ENCODE measurements at regions of chr9 and their contacts with region 1.

Region 1: GRCh38 chr9:89602978-89603766 is 1.6 kb upstream of the GADD45G start:
- DNase-seq: peak; percentile 92
- H3K4me3 Mint-ChIP-seq: peak overlapping the region; percentile 76
- H3K27ac Mint-ChIP-seq: peak overlapping the region; percentile 46
- H3K4me1 Mint-ChIP-seq: peaks cover 33% of the 10 kb centered on the region
- H3K27me3 Mint-ChIP-seq: peaks cover 49% of the 10 kb centered on the region

Region 2: DNA sequence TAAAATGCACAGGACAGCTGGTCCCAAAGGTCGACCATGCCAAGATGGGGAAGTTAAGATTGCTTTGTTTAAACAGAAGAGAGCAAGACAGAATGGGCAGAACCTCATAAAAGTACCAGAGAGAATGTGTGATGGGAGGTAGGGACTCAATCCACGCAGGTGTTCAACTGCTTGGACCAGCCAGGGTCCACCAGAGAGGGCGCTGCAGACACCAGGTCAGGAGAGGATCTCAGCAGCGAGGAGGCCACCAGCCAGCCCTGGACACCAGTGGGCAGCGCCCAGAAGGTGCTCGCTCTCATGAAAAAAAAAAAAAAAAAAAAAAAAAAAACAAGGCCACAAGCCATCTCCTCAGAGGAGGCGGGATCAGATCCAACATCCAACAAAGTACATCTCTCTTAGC is 506.4 kb before region 1 on chr9:
- CTCF ChIA-PET with region 1: no interaction called
- POLR2A ChIA-PET with region 1: no interaction called
- DNase-seq: no peak
- H3K4me3 Mint-ChIP-seq: no peak overlapping the region
- H3K27ac Mint-ChIP-seq: no peak overlapping the region
- H3K4me1 Mint-ChIP-seq: no peaks in the 10 kb centered on the region
- H3K27me3 Mint-ChIP-seq: peaks cover 11% of the 10 kb centered on the region

Region 3: GRCh38 chr9:89613912-89614892 is 11.0 kb after region 1 on chr9:
- CTCF ChIA-PET with region 1: interaction called, 30 read pairs
- POLR2A ChIA-PET with region 1: no interaction called
- DNase-seq: no peak
- H3K4me3 Mint-ChIP-seq: no peak overlapping the region
- H3K27ac Mint-ChIP-seq: no peak overlapping the region
- H3K4me1 Mint-ChIP-seq: peaks cover 5% of the 10 kb centered on the region
- H3K27me3 Mint-ChIP-seq: peaks cover 22% of the 10 kb centered on the region

Region 4: DNA sequence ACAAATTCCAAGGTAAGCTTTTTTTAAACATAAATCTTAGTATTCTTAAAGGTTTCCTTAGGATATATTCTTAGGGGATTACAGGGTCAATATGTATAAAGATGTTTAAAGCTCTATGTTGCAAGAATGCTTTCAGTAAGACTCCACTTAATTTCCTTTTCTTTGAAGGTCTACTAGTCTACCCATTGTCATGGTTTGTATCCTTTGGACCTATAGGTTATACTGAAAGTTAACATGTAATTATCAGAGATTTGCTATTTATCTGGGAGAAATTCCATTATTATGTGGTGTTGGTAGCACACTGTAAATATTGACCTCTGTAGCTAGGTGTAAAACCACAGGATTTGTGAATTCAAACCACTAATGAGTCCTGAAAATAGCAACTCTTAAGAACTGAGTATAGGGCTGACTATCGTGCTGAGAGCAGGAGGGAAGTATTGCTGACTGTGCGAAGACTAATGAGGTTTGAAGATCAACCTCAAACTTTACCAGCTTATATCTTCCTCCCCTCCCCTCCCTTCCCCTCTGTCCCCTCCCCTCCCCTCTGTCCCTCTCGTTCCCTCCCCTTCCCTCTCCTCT is 87.3 kb after region 1 on chr9:
- CTCF ChIA-PET with region 1: no interaction called
- POLR2A ChIA-PET with region 1: no interaction called
- DNase-seq: no peak
- H3K4me3 Mint-ChIP-seq: no peak overlapping the region
- H3K27ac Mint-ChIP-seq: peak overlapping the region; percentile 58
- H3K4me1 Mint-ChIP-seq: peaks cover 27% of the 10 kb centered on the region
- H3K27me3 Mint-ChIP-seq: peaks cover 7% of the 10 kb centered on the region

Region 5: GRCh38 chr9:89743573-89744361 is 140.6 kb after region 1 on chr9:
- CTCF ChIA-PET with region 1: interaction called, 4 read pairs
- POLR2A ChIA-PET with region 1: interaction called, 16 read pairs
- DNase-seq: peak; percentile 89
- H3K4me3 Mint-ChIP-seq: peak overlapping the region; percentile 53
- H3K27ac Mint-ChIP-seq: peak overlapping the region; percentile 92
- H3K4me1 Mint-ChIP-seq: peaks cover 86% of the 10 kb centered on the region
- H3K27me3 Mint-ChIP-seq: no peaks in the 10 kb centered on the region

Region 6: DNA sequence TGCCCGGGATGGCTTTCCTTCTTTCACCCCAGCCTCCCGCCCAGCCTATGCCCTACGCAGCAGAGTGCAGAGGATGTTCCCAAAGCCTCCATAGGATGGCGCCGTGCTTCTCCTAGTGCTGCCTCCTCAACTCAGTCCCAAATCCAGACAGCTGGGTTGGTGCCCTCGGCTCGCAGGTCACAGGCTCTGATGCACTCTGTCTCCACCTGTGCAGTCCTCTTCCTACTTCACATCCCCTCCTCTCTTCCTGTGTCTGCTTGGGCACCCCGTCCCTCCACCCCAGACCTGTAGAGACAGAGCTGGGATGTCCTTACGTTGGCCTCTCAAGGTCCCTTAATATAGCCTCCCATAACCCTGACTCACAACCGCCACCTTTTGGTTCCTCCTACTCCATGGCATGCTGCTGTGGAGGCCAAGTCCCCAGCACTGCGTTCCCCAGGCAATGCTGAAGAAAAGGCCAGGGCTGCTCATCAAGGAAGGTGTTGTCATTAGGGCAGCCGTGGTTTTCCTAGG is 316.1 kb after region 1 on chr9:
- CTCF ChIA-PET with region 1: interaction called, 18 read pairs
- POLR2A ChIA-PET with region 1: interaction called, 3 read pairs
- DNase-seq: peak; percentile 54
- H3K4me3 Mint-ChIP-seq: no peak overlapping the region
- H3K27ac Mint-ChIP-seq: no peak overlapping the region
- H3K4me1 Mint-ChIP-seq: peaks cover 10% of the 10 kb centered on the region
- H3K27me3 Mint-ChIP-seq: peaks cover 7% of the 10 kb centered on the region

Region 7: DNA sequence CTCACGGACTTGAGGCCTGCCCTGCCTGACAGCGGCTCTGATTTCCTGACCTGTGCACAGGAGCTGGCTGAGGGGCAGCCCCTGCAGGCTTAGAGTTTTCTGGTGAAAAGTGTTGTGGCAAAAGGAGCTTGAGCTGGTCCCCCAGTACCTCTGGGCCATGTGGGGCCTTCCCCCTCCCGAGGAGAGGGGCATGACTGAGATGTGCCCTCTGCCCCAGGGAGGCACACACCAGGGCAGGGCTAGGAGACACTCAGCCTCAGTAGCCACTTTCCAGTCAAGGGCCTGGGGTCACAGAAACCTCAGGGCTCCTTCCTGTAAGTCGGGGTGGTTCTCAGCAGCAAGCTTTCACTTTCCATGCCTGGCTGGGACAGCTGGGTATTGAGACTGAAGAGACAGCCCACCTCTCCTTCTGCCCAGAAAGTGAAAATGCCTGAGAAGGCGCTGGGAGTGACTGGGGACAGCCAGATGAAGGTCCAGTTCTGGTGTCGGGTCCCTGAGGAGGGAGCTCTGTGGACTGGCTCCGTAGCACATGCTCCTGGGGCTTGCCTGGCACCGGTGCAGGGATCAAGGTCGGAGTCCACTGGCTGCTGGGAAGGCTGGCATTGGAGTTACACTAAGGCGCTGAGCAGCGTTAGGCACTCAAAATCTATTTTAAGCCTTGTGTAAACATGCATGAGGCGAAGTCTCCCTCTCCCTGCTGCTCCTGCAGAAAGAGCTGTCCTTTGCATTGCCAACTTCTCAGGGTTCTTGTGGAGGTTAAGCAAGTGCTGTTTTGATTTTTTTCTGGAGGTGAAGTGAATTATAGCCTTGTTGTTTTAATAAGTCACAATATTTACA is 396.6 kb after region 1 on chr9:
- CTCF ChIA-PET with region 1: interaction called, 11 read pairs
- POLR2A ChIA-PET with region 1: no interaction called
- DNase-seq: peak; percentile 83
- H3K4me3 Mint-ChIP-seq: peak overlapping the region; percentile 70
- H3K27ac Mint-ChIP-seq: peak overlapping the region; percentile 94
- H3K4me1 Mint-ChIP-seq: peaks cover 44% of the 10 kb centered on the region
- H3K27me3 Mint-ChIP-seq: no peaks in the 10 kb centered on the region

Region 8: DNA sequence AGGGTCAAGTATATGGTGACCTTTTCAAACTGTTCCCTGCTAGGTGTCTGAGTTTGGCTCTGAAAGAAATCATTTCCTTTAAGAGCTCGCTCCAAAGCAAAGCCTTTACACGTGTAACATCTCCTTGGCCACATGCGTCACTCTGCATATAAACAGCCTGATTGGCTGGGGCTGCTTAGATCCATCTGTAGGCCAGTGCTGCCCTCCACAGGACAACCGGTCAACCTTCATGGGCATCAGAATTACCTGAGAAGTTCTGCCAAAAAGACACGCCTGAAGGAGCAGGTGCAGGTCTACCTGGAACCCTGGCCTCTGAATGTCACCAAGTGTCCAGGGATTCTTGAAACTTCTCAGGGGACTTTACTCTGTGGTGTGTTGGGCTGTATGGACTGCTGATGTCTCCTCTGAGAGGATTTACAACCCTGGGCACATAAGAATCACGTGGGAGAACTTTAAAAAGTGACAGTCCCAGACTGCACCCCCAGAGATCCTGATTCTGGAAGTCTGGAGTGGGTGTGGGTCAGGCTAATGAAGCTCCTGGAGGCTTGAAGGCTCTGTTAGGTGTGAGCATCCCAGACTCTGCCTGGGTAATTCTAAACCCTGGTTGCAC is 499.2 kb after region 1 on chr9:
- CTCF ChIA-PET with region 1: interaction called, 82 read pairs
- POLR2A ChIA-PET with region 1: interaction called, 3 read pairs
- DNase-seq: peak; percentile 87
- H3K4me3 Mint-ChIP-seq: no peak overlapping the region
- H3K27ac Mint-ChIP-seq: no peak overlapping the region
- H3K4me1 Mint-ChIP-seq: peaks cover 17% of the 10 kb centered on the region
- H3K27me3 Mint-ChIP-seq: peaks cover 10% of the 10 kb centered on the region